Psoas muscle (tissue), 8 donors: ENCODE measurements at regions of chr17 and their contacts with region 1.

Region 1: GRCh38 chr17:28306954-28307401 is 12.0 kb upstream of the TMEM97 start:
- DNase-seq: no peak
- ATAC-seq: no peak
- H3K4me3 ChIP-seq: no peak overlapping the region
- H3K27ac ChIP-seq: no peak overlapping the region
- H3K4me1 ChIP-seq: no peaks in the 10 kb centered on the region
- H3K27me3 ChIP-seq: peaks cover 2 to 16% (median 3%) of the 10 kb centered on the region in 3 donors
- CTCF ChIP-seq: no peak

Region 2: GRCh38 chr17:28247671-28248555 is 59.1 kb before region 1 on chr17:
- intact Hi-C with region 1: loop called in 1 of 2 experiments (anchors 10 kb)
- DNase-seq: no peak
- ATAC-seq: no peak
- H3K4me3 ChIP-seq: no peak overlapping the region
- H3K27ac ChIP-seq: no peak overlapping the region
- H3K4me1 ChIP-seq: no peaks in the 10 kb centered on the region
- H3K27me3 ChIP-seq: peaks cover 0 to 27% (median 8%) of the 10 kb centered on the region in 3 donors
- CTCF ChIP-seq: no peak

Region 3: GRCh38 chr17:28563475-28563874 is 256.5 kb after region 1 on chr17:
- intact Hi-C with region 1: no loop called
- DNase-seq: no peak
- ATAC-seq: no peak
- H3K4me3 ChIP-seq: no peak overlapping the region
- H3K27ac ChIP-seq: no peak overlapping the region
- H3K4me1 ChIP-seq: no peaks in the 10 kb centered on the region
- H3K27me3 ChIP-seq: no peaks in the 10 kb centered on the region
- CTCF ChIP-seq: no peak